ENCODE measurements at regions of chr10 and their contacts with region 1.

Region 1: DNA sequence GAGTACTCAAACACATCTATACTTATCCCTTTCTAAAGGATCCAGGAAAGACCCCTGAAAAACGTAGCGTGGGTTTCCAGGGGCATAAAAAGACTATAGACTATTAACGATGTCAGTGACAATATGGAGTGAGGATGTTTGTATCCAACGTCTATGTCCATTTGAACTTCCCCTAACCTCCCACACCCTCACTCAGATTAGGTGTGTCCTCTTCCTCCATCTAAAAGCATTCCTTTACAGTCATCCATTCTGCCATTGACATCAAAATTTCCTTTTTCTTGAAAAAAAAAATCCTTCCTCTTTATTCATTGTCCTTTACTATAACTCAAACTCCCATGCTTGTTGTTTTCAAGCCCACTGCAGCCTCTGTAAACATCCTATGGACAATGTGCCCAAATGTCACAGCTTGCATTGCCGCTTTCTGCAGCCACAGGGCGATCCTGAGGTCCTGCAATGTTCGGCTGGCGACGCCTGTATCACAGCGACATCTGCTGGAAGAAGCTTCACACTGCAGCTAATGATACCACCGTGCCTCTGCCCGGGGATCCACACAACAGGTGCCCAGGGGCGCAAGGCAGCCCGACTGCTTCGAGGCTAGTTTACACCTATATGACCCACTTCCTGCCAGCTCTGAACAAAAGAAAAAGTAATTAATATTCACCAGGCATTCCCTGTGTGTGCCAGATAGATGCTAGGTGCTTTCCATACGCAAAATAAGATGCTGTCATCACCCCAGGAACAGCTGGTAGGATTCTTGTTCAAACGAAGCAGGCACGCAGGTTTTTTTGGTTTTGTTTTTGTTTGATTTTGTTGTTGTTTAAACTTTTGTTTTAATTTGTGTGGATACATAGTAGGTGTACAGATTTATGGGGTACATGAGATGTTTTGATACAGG is 267.9 kb upstream of the GHITM start:
- DNase-seq: peak; percentile 72
- H3K4me3 ChIP-seq: no peak overlapping the region
- H3K27ac ChIP-seq: no peak overlapping the region
- H3K4me1 ChIP-seq: no peaks in the 10 kb centered on the region
- H3K27me3 ChIP-seq: no peaks in the 10 kb centered on the region
- CTCF ChIP-seq: peak; percentile 90

Region 2: DNA sequence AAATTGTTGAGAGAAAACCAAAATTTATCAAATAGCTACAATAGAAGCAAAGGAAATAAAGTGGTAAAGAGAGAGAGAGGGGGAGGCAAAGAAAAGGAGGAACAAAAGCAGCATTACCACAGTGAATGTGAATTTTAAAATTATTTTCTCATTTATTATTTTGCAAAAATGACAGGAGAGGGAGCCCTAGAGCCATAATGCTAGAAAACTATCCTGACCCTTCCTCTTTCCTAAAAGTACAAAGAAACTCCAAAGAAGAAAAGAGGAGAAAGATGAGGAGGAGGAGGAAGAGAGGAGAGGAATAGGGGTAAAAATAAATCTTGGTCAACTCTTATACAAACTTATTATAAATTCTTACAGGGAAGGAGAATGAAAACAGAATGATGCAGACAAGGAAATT is 1074.9 kb before region 1 on chr10:
- intact Hi-C with region 1: loop called (anchors 5 kb)
- DNase-seq: no peak
- H3K4me3 ChIP-seq: no peak overlapping the region
- H3K27ac ChIP-seq: no peak overlapping the region
- H3K4me1 ChIP-seq: no peaks in the 10 kb centered on the region
- H3K27me3 ChIP-seq: no peaks in the 10 kb centered on the region
- CTCF ChIP-seq: no peak

Region 3: GRCh38 chr10:83736008-83736407 is 135.4 kb before region 1 on chr10:
- intact Hi-C with region 1: no loop called
- DNase-seq: no peak
- H3K4me3 ChIP-seq: no peak overlapping the region
- H3K27ac ChIP-seq: no peak overlapping the region
- H3K4me1 ChIP-seq: no peaks in the 10 kb centered on the region
- H3K27me3 ChIP-seq: no peaks in the 10 kb centered on the region
- CTCF ChIP-seq: no peak

Region 4: DNA sequence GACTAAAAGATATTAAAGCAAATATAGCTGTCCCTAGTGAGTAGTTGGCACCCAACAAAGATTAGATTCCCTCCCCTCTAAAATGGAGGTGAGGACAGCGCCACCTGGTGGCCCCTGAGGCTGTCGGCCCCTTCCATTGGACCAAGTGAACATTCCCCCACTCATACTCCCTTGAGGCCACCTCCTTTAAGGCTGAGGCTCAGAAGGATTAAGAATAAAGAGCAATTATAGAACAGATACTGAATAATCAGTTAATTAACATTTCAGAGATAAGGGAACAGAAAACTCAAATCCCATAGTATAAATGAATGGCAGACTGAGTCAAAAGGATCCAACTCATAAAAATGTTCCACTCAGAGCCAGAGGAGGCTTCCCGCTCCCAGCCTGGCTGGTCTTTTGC is 137.4 kb after region 1 on chr10:
- intact Hi-C with region 1: loop called (anchors 5 kb)
- DNase-seq: peak; percentile 46
- H3K4me3 ChIP-seq: no peak overlapping the region
- H3K27ac ChIP-seq: no peak overlapping the region
- H3K4me1 ChIP-seq: no peaks in the 10 kb centered on the region
- H3K27me3 ChIP-seq: no peaks in the 10 kb centered on the region
- CTCF ChIP-seq: peak; percentile 65

Measured in colonic mucosa (tissue), 4 donors.